B cell (primary cell): ENCODE measurements at regions of chr1 and their contacts with region 1.

Region 1: GRCh38 chr1:159056069-159056698 is 20.4 kb downstream of the AIM2 start:
- DNase-seq: no peak
- ATAC-seq: no peak
- H3K4me3 ChIP-seq: peak overlapping the region in 1 of 5 experiments; percentile 11
- H3K4me3 Mint-ChIP-seq: peak overlapping the region; percentile 40
- H3K27ac ChIP-seq: peak overlapping the region; percentile 66 to 78
- H3K27ac Mint-ChIP-seq: peak overlapping the region; percentile 89
- H3K4me1 ChIP-seq: peaks cover 58 to 74% of the 10 kb centered on the region in 2 donors
- H3K4me1 Mint-ChIP-seq: peaks cover 74% of the 10 kb centered on the region
- H3K27me3 ChIP-seq: no peaks in the 10 kb centered on the region
- H3K27me3 Mint-ChIP-seq: no peaks in the 10 kb centered on the region
- CTCF ChIP-seq: no peak

Region 2: DNA sequence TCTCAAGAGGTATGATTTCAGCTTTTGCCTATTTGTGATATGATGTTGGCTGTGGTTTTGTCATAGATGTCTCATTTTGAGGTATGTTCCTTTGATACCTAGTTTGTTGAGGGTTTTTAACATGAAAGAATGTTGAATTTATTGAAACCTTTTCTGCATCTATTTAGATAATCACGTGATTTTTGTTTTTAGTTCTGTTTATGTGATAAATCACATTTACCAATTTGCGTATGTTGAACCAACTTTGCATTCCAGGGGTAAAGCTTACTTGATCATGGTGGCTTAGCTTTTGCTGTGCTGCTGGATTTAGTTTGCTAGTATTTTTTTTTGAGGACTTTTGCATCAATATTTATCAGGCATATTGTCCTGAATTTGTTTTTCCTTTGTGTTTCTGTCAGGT is 73.0 kb before region 1 on chr1:
- CTCF ChIA-PET with region 1: no interaction called
- POLR2A ChIA-PET with region 1: no interaction called
- intact Hi-C with region 1: no loop called
- DNase-seq: no peak
- ATAC-seq: no peak
- H3K4me3 ChIP-seq: no peak overlapping the region
- H3K4me3 Mint-ChIP-seq: no peak overlapping the region
- H3K27ac ChIP-seq: no peak overlapping the region
- H3K27ac Mint-ChIP-seq: no peak overlapping the region
- H3K4me1 ChIP-seq: no peaks in the 10 kb centered on the region
- H3K4me1 Mint-ChIP-seq: no peaks in the 10 kb centered on the region
- H3K27me3 ChIP-seq: peaks cover 0 to 2% (median 0%) of the 10 kb centered on the region in 4 experiments
- H3K27me3 Mint-ChIP-seq: peaks cover 5% of the 10 kb centered on the region
- CTCF ChIP-seq: no peak

Region 3: DNA sequence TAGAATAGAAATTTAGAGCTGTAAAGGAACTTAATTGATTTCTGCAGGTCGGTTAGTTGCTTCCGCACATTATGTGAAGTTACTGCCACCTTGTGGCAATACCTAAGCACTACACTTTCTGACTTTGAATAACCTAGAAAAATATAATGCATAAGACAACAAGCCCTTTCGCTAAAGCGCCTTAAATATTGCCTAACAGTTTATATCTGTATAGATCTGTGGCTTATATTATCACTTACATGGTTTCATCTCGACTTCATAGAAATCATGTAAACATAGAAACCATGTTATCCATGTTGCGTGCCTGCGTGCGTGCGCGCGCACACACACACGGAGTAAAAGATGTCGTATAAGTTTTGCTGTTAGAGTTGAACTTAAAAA is 57.4 kb before region 1 on chr1:
- CTCF ChIA-PET with region 1: no interaction called
- POLR2A ChIA-PET with region 1: no interaction called
- intact Hi-C with region 1: no loop called
- DNase-seq: peak; percentile 80
- ATAC-seq: peak; percentile 73
- H3K4me3 ChIP-seq: no peak overlapping the region
- H3K4me3 Mint-ChIP-seq: peak overlapping the region; percentile 55
- H3K27ac ChIP-seq: no peak overlapping the region
- H3K27ac Mint-ChIP-seq: no peak overlapping the region
- H3K4me1 ChIP-seq: peaks cover 6 to 12% of the 10 kb centered on the region in 2 donors
- H3K4me1 Mint-ChIP-seq: peaks cover 22% of the 10 kb centered on the region
- H3K27me3 ChIP-seq: no peaks in the 10 kb centered on the region
- H3K27me3 Mint-ChIP-seq: no peaks in the 10 kb centered on the region
- CTCF ChIP-seq: peak; percentile 98

Region 4: DNA sequence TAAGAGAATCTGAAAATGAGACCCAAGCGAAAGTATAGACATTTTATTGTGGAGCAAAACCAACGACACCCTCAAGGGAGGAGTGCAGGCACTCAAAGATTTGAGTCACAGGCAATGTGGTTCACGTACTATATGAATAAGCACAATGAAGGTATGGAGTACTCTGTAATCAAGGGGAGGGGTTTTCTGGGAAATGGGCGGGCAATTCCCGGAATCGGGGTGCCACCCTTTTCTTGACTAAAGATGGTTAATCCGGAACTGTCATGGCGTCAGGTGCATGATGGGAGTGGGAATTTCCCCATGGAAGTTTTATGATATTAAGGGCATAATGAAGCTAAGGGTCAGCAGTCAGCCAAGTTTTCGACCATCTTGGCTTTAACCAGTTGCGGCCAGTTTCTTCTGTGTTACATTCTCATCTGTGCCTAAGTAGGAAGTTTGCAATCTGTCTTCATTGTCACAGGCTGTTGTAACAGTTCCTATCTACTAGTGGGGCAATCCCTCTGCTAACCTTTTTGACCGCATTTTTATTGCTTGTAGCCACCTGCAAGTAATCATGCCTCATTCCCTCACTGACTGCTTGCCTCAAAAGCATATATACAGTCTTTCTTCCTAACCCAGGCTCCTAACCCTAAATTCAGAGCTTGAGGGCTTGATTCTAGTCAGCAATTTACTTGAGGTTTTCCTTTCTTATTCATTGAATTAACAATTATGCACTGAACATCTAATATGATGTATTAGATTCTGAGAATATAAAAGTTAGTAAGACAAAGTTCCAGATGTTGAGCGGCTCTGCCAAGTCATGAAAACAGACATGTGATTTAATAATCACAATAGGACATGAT is 21.2 kb after region 1 on chr1:
- CTCF ChIA-PET with region 1: interaction called, 222 read pairs
- POLR2A ChIA-PET with region 1: interaction called, 4 read pairs
- intact Hi-C with region 1: loop called (anchors 1 kb)
- DNase-seq: peak; percentile 83
- ATAC-seq: peak; percentile 61
- H3K4me3 ChIP-seq: peak overlapping the region in 4 of 5 experiments; percentile 54 to 80 (median 60)
- H3K4me3 Mint-ChIP-seq: peak overlapping the region; percentile 89
- H3K27ac ChIP-seq: peak overlapping the region; percentile 76 to 80
- H3K27ac Mint-ChIP-seq: peak overlapping the region; percentile 96
- H3K4me1 ChIP-seq: peaks cover 13 to 24% of the 10 kb centered on the region in 2 donors
- H3K4me1 Mint-ChIP-seq: peaks cover 28% of the 10 kb centered on the region
- H3K27me3 ChIP-seq: no peaks in the 10 kb centered on the region
- H3K27me3 Mint-ChIP-seq: no peaks in the 10 kb centered on the region
- CTCF ChIP-seq: no peak